ENCODE measurements at regions of chr16 and their contacts with region 1.

Region 1: GRCh38 chr16:89945670-89946069 is 2.9 kb upstream of the DEF8 start:
- DNase-seq: no peak
- H3K4me3 ChIP-seq: no peak overlapping the region
- H3K27ac ChIP-seq: no peak overlapping the region
- H3K4me1 ChIP-seq: peaks cover 9 to 15% of the 10 kb centered on the region in 2 donors
- H3K27me3 ChIP-seq: no peaks in the 10 kb centered on the region
- CTCF ChIP-seq: no peak

Region 2: GRCh38 chr16:89779231-89779908 is 166.3 kb before region 1 on chr16:
- intact Hi-C with region 1: no loop called
- DNase-seq: no peak
- H3K4me3 ChIP-seq: no peak overlapping the region
- H3K27ac ChIP-seq: no peak overlapping the region
- H3K4me1 ChIP-seq: no peaks in the 10 kb centered on the region
- H3K27me3 ChIP-seq: no peaks in the 10 kb centered on the region
- CTCF ChIP-seq: no peak

Region 3: GRCh38 chr16:89922884-89923690 is 22.6 kb before region 1 on chr16 and contains the start of gene TUBB3:
- intact Hi-C with region 1: loop called (anchors 2 kb)
- DNase-seq: no peak
- H3K4me3 ChIP-seq: peak within 1 kb of the TSS; percentile 64 to 67
- H3K27ac ChIP-seq: peak within 1 kb of the TSS; percentile 85
- H3K4me1 ChIP-seq: peaks cover 25 to 40% of the 10 kb centered on the region in 2 donors
- H3K27me3 ChIP-seq: peaks cover 7% of the 10 kb centered on the region
- CTCF ChIP-seq: no peak
- total RNA-seq, gene TUBB3: 2.3 TPM

Measured in ascending aorta (tissue), 2 donors.